ENCODE measurements at regions of chr9 and their contacts with region 1.

Region 1: DNA sequence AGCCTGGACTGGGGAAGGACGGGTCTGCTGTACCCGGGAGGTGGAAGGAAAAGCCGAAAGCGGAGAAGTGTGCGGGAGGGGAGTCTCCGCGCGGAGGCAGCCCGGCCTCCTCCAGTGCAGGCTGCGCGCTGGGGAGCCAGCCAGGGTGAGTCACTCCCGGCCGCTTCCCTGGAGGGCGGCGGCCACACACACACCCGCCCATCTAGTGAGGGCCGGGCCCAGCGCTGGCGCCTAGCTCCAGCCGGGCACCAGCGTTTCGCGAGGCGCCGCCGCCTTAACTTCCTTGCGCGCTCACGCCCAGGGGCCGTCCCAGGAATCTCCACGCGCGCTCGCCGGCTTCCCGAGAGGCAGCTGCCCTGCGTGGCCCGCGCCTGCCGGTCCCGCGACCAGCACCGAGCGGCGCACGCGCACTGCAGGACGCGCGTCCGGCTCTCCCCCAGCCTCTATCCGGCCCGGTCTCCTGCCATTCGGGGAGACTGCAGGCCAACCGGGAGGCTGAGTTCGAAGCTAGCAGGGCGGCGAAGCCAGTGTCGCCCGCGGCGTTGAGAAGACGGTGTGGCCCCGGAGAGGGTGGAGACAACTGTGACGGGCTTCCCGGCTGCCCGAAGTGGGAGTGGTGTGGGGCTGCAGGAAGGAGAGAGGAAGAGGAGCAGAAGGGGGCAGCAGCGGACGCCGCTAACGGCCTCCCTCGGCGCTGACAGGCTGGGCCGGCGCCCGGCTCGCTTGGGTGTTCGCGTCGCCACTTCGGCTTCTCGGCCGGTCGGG is at the start of gene JAK2:
- DNase-seq: peak; percentile 92
- H3K4me3 Mint-ChIP-seq: no peak within 1 kb of the TSS
- H3K27ac Mint-ChIP-seq: peak within 1 kb of the TSS; percentile 97
- H3K4me1 Mint-ChIP-seq: peaks cover 46% of the 10 kb centered on the region
- H3K27me3 Mint-ChIP-seq: no peaks in the 10 kb centered on the region
- total RNA-seq, gene JAK2: 46.8 to 51.0 TPM

Region 2: DNA sequence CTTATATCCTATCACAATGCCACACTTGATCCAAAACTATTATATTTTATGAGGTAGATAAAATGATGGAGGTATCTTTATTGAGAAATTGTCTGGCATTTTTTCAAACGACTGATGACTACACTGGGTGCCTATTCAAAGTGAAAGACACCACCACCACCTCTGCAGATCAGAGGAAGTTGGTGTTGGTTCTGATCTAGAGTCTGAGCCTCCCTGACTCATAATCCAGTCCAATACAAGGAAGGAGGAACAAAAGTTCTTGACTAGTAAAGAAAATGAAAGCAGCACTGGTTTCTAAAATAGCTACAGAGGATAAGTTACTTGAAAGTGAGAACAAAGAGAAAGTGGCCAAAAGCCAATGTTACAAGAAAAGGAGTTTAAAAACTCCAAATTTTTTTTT is 1598.9 kb before region 1 on chr9:
- CTCF ChIA-PET with region 1: no interaction called
- intact Hi-C with region 1: loop called (anchors 10 kb)
- DNase-seq: peak; percentile 75
- H3K4me3 Mint-ChIP-seq: no peak overlapping the region
- H3K27ac Mint-ChIP-seq: peak overlapping the region; percentile 56
- H3K4me1 Mint-ChIP-seq: peaks cover 49% of the 10 kb centered on the region
- H3K27me3 Mint-ChIP-seq: no peaks in the 10 kb centered on the region

Region 3: DNA sequence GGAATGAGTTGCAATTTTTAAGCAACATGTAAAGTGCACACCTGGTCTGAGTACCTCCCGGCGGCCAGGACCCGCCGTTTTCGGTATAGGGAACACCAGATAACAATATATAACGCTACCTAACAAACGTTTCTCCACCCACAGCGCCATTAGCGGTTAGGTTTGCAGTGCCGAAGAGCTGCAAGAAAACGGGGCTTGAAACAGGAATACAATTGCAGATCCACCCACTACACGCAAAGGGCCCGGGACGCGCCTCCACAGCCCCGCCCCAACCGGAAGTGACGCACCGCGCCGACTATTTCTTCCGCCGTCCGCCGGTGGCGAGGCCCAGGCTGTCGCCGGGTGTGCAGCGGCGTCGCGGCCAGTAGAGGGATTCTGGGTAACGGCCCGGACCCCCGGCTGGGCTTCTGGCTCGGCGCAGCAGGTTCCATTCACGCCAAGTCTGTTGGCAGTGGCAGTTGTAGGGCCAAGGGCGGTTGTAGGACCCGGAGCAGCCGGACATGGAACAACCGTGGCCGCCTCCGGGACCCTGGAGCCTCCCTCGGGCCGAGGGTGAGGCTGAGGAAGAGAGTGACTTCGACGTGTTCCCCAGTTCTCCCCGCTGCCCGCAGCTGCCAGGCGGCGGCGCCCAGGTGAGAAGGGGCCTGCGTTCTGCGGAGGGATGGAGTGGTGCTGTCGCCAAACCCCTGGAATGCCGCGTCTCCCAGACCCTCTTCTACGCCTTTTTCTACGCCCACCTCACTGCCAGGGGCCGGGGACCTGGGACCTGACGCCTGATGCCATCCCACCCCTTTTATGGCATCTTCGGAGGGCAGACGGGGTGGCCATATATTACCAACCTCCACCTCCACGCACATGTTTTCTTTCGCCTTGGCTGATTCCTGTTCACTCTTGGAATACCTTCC is 305.3 kb before region 1 on chr9 and contains the start of gene CDC37L1:
- CTCF ChIA-PET with region 1: no interaction called
- intact Hi-C with region 1: loop called (anchors 2 kb)
- DNase-seq: peak; percentile 99
- H3K4me3 Mint-ChIP-seq: no peak within 1 kb of the TSS
- H3K27ac Mint-ChIP-seq: no peak within 1 kb of the TSS
- H3K4me1 Mint-ChIP-seq: peaks cover 17% of the 10 kb centered on the region
- H3K27me3 Mint-ChIP-seq: no peaks in the 10 kb centered on the region
- total RNA-seq, gene CDC37L1: 13.7 to 14.5 TPM

Region 4: GRCh38 chr9:4832786-4833579 is 151.8 kb before region 1 on chr9:
- CTCF ChIA-PET with region 1: interaction called, 7 read pairs
- intact Hi-C with region 1: loop called (anchors 1 kb)
- DNase-seq: peak; percentile 80
- H3K4me3 Mint-ChIP-seq: no peak overlapping the region
- H3K27ac Mint-ChIP-seq: peak overlapping the region; percentile 85
- H3K4me1 Mint-ChIP-seq: peaks cover 46% of the 10 kb centered on the region
- H3K27me3 Mint-ChIP-seq: no peaks in the 10 kb centered on the region

Region 5: GRCh38 chr9:4970970-4971641 is 13.7 kb before region 1 on chr9:
- CTCF ChIA-PET with region 1: interaction called, 18 read pairs
- intact Hi-C with region 1: loop called (anchors 1 kb)
- DNase-seq: peak; percentile 91
- H3K4me3 Mint-ChIP-seq: no peak overlapping the region
- H3K27ac Mint-ChIP-seq: no peak overlapping the region
- H3K4me1 Mint-ChIP-seq: peaks cover 23% of the 10 kb centered on the region
- H3K27me3 Mint-ChIP-seq: no peaks in the 10 kb centered on the region

Region 6: GRCh38 chr9:5459289-5459829 is 474.6 kb after region 1 on chr9:
- CTCF ChIA-PET with region 1: no interaction called
- intact Hi-C with region 1: no loop called
- DNase-seq: peak; percentile 61
- H3K4me3 Mint-ChIP-seq: peak overlapping the region; percentile 57
- H3K27ac Mint-ChIP-seq: peak overlapping the region; percentile 84
- H3K4me1 Mint-ChIP-seq: peaks cover 65% of the 10 kb centered on the region
- H3K27me3 Mint-ChIP-seq: no peaks in the 10 kb centered on the region

Region 7: GRCh38 chr9:5582835-5583195 is 598.0 kb after region 1 on chr9:
- CTCF ChIA-PET with region 1: no interaction called
- intact Hi-C with region 1: loop called (anchors 2 kb)
- DNase-seq: peak; percentile 72
- H3K4me3 Mint-ChIP-seq: peak overlapping the region; percentile 27
- H3K27ac Mint-ChIP-seq: peak overlapping the region; percentile 78
- H3K4me1 Mint-ChIP-seq: peaks cover 66% of the 10 kb centered on the region
- H3K27me3 Mint-ChIP-seq: no peaks in the 10 kb centered on the region

Region 8: DNA sequence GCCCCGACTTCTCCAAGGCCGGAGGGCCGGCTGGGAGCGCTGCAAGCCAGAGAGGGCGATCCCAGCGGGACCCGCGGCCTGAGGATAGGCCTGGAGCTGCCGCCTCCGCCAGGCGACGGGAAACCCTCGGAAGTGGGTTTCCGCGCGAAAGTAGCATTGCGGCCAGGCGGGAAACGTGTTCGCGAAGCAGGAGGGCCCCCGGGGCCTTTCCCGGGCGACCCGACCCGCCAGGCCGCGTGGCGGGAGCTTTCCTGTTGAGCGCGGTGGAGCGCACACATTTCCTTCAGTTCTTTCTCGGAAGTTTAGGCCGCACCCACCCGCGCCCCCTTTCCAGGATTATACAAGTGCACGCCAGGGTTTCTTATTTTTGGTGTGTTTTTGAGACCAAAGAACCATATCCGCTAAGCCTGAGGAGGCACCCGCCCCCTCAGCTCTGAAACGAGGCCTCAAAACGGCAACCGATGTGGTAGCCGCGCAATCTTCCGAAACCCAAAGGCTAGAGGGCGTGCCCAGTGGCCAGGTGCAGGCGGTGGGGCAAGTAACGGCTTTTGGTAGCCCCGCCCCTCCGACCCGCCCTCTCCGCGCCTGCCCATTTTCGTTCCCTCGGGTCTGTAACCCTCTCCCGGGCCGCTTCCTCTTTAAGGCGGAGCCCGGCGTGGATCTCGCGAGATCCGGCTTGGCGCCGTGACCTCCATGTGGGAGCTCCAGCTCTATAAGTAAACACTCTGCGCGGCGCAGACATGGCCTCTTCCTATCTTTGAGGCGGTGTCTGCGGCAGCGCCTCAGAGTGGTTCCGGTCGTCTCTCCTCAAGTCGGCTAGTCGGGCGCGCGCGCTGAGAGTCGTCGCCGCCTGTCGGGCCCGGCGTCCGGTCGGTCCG is 1427.9 kb after region 1 on chr9 and contains the start of gene UHRF2:
- CTCF ChIA-PET with region 1: no interaction called
- intact Hi-C with region 1: loop called (anchors 10 kb)
- DNase-seq: peak; percentile 100
- H3K4me3 Mint-ChIP-seq: peak within 1 kb of the TSS; percentile 82
- H3K27ac Mint-ChIP-seq: peak within 1 kb of the TSS; percentile 95
- H3K4me1 Mint-ChIP-seq: peaks cover 29% of the 10 kb centered on the region
- H3K27me3 Mint-ChIP-seq: no peaks in the 10 kb centered on the region
- total RNA-seq, gene UHRF2: 62.7 to 71.5 TPM